Activated CD4-positive, alpha-beta T cell treated with anti-CD3 and anti-CD28 coated beads for 36 hours (primary cell): ENCODE measurements at regions of chr2 and their contacts with region 1.

Region 1: DNA sequence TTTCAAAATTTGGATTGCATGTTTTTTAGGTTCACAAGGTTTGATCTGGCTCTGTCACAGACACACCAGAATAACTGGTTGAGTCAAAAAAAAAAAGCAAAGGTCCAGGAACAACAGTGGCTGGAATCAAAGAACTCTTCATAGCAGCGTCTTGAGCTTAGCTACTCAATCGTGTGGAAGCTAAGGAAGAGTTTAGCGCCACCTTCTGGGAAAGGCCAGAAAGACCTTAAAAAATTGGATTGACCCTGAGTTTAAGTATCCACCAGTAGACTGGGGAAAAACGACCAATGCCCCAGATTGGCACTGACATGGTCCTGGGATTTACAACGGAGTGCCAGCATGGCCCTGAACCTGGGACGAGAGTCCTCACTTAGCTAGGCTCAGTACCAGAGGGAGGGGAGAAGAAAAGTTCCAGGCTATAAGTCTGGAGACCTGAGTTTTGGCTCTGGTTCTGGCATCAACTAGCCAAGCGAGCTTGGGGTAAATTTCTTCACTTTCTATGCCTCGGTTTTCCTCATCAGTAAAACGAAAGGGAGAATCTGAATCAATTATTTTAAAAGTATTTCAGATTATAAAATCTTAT is 71.1 kb upstream of the TFCP2L1 start:
- DNase-seq: peak; percentile 47
- ATAC-seq: peak; percentile 68
- H3K4me3 Mint-ChIP-seq: no peak overlapping the region
- H3K27ac Mint-ChIP-seq: no peak overlapping the region
- H3K4me1 Mint-ChIP-seq: peaks cover 9% of the 10 kb centered on the region
- H3K27me3 Mint-ChIP-seq: no peaks in the 10 kb centered on the region

Region 2: DNA sequence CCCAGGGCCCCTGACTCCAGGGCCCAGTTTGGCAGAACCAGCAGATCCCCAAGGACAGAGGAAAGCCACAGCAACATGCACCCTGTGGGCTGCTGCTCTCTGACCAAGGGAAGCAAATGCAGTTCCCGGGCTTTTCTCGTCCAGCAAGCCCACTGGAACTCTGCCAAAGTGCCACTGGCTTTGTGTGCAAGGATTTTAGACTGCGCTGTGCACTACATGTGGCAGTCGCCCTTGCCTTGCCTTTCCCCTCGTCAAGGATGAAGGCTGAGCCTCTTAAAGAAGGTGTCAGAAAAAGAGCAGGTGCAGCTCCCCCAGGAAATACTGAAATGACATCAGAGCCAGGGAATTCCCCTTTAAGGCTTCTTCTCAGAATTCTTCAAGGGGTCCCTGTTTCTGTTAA is 270.3 kb before region 1 on chr2:
- CTCF ChIA-PET with region 1: interaction called, 8 read pairs
- POLR2A ChIA-PET with region 1: no interaction called
- intact Hi-C with region 1: loop called in 1 of 2 experiments (anchors 1 kb)
- DNase-seq: no peak
- ATAC-seq: no peak
- H3K4me3 Mint-ChIP-seq: no peak overlapping the region
- H3K27ac Mint-ChIP-seq: no peak overlapping the region
- H3K4me1 Mint-ChIP-seq: no peaks in the 10 kb centered on the region
- H3K27me3 Mint-ChIP-seq: peaks cover 8% of the 10 kb centered on the region

Region 3: GRCh38 chr2:121095257-121096080 is 260.7 kb before region 1 on chr2:
- CTCF ChIA-PET with region 1: interaction called, 10 read pairs
- POLR2A ChIA-PET with region 1: no interaction called
- intact Hi-C with region 1: loop called in 1 of 2 experiments (anchors 5 kb)
- DNase-seq: peak; percentile 64
- ATAC-seq: peak; percentile 51
- H3K4me3 Mint-ChIP-seq: no peak overlapping the region
- H3K27ac Mint-ChIP-seq: no peak overlapping the region
- H3K4me1 Mint-ChIP-seq: no peaks in the 10 kb centered on the region
- H3K27me3 Mint-ChIP-seq: no peaks in the 10 kb centered on the region

Region 4: GRCh38 chr2:121345887-121346286 is 10.3 kb before region 1 on chr2:
- CTCF ChIA-PET with region 1: interaction called, 18 read pairs
- POLR2A ChIA-PET with region 1: no interaction called
- intact Hi-C with region 1: no loop called
- DNase-seq: no peak
- ATAC-seq: no peak
- H3K4me3 Mint-ChIP-seq: no peak overlapping the region
- H3K27ac Mint-ChIP-seq: no peak overlapping the region
- H3K4me1 Mint-ChIP-seq: no peaks in the 10 kb centered on the region
- H3K27me3 Mint-ChIP-seq: no peaks in the 10 kb centered on the region

Region 5: DNA sequence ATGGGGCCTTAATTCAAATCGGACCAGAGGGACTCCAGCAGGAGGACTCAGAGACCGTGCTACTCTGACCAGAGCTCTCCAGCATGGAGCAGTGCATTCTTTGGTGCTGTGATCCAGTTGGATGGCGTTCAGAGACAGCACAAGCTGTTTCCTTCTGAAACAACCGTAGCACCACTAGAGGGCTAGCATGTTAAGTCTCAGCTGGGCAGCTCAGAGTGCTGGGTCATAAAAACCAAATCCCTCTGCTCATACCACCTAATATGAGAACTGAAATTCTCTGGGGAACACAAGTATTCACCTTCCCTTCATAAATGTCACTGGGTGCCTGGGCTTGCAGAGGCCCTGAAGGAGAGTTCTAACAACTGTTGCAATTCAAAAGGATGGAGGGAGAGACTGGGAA is 26.6 kb after region 1 on chr2:
- CTCF ChIA-PET with region 1: interaction called, 4 read pairs
- POLR2A ChIA-PET with region 1: interaction called, 10 read pairs
- intact Hi-C with region 1: no loop called
- DNase-seq: no peak
- ATAC-seq: no peak
- H3K4me3 Mint-ChIP-seq: no peak overlapping the region
- H3K27ac Mint-ChIP-seq: no peak overlapping the region
- H3K4me1 Mint-ChIP-seq: peaks cover 7% of the 10 kb centered on the region
- H3K27me3 Mint-ChIP-seq: no peaks in the 10 kb centered on the region